HEK293T (cell line): ENCODE measurements at regions of chr1 and their contacts with region 1.

Region 1: DNA sequence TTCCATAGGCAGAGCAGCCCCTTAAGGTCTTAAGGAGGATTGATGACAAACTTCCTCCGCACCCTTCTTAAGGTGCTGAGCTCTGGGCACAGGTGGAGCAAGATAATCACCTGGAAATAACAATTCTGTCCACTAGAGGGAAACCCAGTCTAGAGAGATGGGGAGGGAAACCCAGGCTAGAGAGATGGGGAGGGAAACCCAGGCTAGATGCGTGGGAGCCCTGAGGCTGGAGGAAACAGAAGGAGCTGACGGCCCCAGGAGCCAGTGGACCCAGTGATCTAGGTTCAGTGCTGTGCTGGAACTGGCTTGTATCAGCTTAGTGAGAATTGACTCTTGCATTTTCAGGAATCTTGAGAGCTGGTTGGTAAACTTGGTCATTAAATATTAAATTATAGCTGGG is 17.8 kb upstream of the MYCL start:
- DNase-seq: peak; percentile 74

Region 2: GRCh38 chr1:39852896-39853295 is 66.6 kb before region 1 on chr1:
- CTCF ChIA-PET with region 1: no interaction called
- POLR2A ChIA-PET with region 1: no interaction called
- DNase-seq: no peak

Region 3: GRCh38 chr1:39901698-39902459 is 17.7 kb before region 1 on chr1 and contains the start of gene MYCL:
- CTCF ChIA-PET with region 1: interaction called, 15 read pairs
- POLR2A ChIA-PET with region 1: no interaction called
- DNase-seq: peak; percentile 86

Region 4: GRCh38 chr1:39954816-39955546 is 35.4 kb after region 1 on chr1 and contains the start of gene MFSD2A:
- CTCF ChIA-PET with region 1: interaction called, 15 read pairs
- POLR2A ChIA-PET with region 1: interaction called, 5 read pairs
- DNase-seq: peak; percentile 95

Region 5: GRCh38 chr1:39973503-39974135 is 54.1 kb after region 1 on chr1:
- CTCF ChIA-PET with region 1: interaction called, 58 read pairs
- POLR2A ChIA-PET with region 1: interaction called, 3 read pairs
- DNase-seq: peak; percentile 83

Region 6: GRCh38 chr1:40032240-40032891 is 112.8 kb after region 1 on chr1:
- CTCF ChIA-PET with region 1: interaction called, 26 read pairs
- POLR2A ChIA-PET with region 1: no interaction called
- DNase-seq: peak; percentile 56